ENCODE measurements at regions of chr19 and their contacts with region 1.

Region 1: GRCh38 chr19:54448774-54449700 is at the start of gene LENG8:
- DNase-seq: peak; percentile 98
- ATAC-seq: peak; percentile 92
- H3K4me3 Mint-ChIP-seq: peak within 1 kb of the TSS; percentile 100
- H3K27ac Mint-ChIP-seq: peak within 1 kb of the TSS; percentile 97
- H3K4me1 Mint-ChIP-seq: peaks cover 49% of the 10 kb centered on the region
- H3K27me3 Mint-ChIP-seq: no peaks in the 10 kb centered on the region
- CTCF ChIP-seq: no peak
- total RNA-seq, gene LENG8: 296 and 363 TPM in 2 replicates

Region 2: GRCh38 chr19:54115109-54116063 is 333.7 kb before region 1 on chr19 and contains the starts of genes PRPF31 and TFPT:
- CTCF ChIA-PET with region 1: no interaction called
- POLR2A ChIA-PET with region 1: interaction called, 9 read pairs
- intact Hi-C with region 1: loop called (anchors 2 kb)
- DNase-seq: peak; percentile 90
- ATAC-seq: peak; percentile 93
- H3K4me3 Mint-ChIP-seq: peak within 1 kb of the TSS; percentile 94
- H3K27ac Mint-ChIP-seq: peak within 1 kb of the TSS; percentile 98
- H3K4me1 Mint-ChIP-seq: peaks cover 36% of the 10 kb centered on the region
- H3K27me3 Mint-ChIP-seq: no peaks in the 10 kb centered on the region
- CTCF ChIP-seq: no peak
- total RNA-seq, gene PRPF31: 78.9 and 79.3 TPM in 2 replicates
- total RNA-seq, gene TFPT: 16.6 and 17.9 TPM in 2 replicates

Region 3: GRCh38 chr19:54203151-54203611 is 245.9 kb before region 1 on chr19:
- CTCF ChIA-PET with region 1: no interaction called
- POLR2A ChIA-PET with region 1: interaction called, 16 read pairs
- intact Hi-C with region 1: loop called (anchors 2 kb)
- DNase-seq: no peak
- ATAC-seq: no peak
- H3K4me3 Mint-ChIP-seq: peak overlapping the region; percentile 100
- H3K27ac Mint-ChIP-seq: peak overlapping the region; percentile 24
- H3K4me1 Mint-ChIP-seq: peaks cover 82% of the 10 kb centered on the region
- H3K27me3 Mint-ChIP-seq: no peaks in the 10 kb centered on the region
- CTCF ChIP-seq: no peak

Region 4: DNA sequence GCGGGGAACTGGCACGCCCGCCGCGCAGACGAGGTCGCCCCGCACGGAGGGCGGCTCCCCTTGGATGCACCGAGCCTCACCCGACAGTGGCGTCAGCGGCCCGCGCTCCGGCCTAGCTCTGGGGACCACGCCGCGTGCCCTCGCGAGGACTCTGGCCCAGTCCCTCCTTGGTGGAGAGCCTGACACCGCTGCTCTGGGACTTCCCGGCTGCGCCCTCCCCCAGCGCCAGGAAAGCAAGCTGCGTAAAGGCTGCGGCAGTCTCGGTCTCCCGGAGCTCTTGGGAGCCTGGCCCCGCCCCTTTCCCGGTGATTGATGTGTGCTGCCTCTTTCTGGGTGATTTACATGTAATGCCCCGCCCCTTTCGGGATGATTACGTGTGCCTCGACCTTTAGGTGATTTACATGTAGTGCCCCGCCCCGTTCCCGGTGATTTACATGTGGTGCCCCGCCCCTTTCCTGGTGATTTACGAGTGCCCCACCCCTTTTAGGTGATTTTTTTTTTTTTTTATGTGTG is 14.6 kb after region 1 on chr19 and contains the start of gene LENG9:
- CTCF ChIA-PET with region 1: no interaction called
- POLR2A ChIA-PET with region 1: interaction called, 78 read pairs
- intact Hi-C with region 1: loop called (anchors 1 kb)
- DNase-seq: peak; percentile 85
- ATAC-seq: peak; percentile 61
- H3K4me3 Mint-ChIP-seq: peak within 1 kb of the TSS; percentile 82
- H3K27ac Mint-ChIP-seq: peak within 1 kb of the TSS; percentile 90
- H3K4me1 Mint-ChIP-seq: peaks cover 28% of the 10 kb centered on the region
- H3K27me3 Mint-ChIP-seq: no peaks in the 10 kb centered on the region
- CTCF ChIP-seq: no peak
- total RNA-seq, gene LENG9: 6.3 and 8.5 TPM in 2 replicates

Region 5: GRCh38 chr19:54561840-54562239 is 112.8 kb after region 1 on chr19:
- CTCF ChIA-PET with region 1: no interaction called
- POLR2A ChIA-PET with region 1: no interaction called
- intact Hi-C with region 1: no loop called
- DNase-seq: no peak
- ATAC-seq: no peak
- H3K4me3 Mint-ChIP-seq: no peak overlapping the region
- H3K27ac Mint-ChIP-seq: no peak overlapping the region
- H3K4me1 Mint-ChIP-seq: no peaks in the 10 kb centered on the region
- H3K27me3 Mint-ChIP-seq: peaks cover 15% of the 10 kb centered on the region
- CTCF ChIP-seq: no peak

Region 6: GRCh38 chr19:55643348-55644176 is 1194.5 kb after region 1 on chr19 and contains the start of gene ZNF581:
- CTCF ChIA-PET with region 1: no interaction called
- POLR2A ChIA-PET with region 1: interaction called, 14 read pairs
- intact Hi-C with region 1: no loop called
- DNase-seq: peak; percentile 84
- ATAC-seq: peak; percentile 51
- H3K4me3 Mint-ChIP-seq: peak within 1 kb of the TSS; percentile 86
- H3K27ac Mint-ChIP-seq: peak within 1 kb of the TSS; percentile 96
- H3K4me1 Mint-ChIP-seq: peaks cover 66% of the 10 kb centered on the region
- H3K27me3 Mint-ChIP-seq: no peaks in the 10 kb centered on the region
- CTCF ChIP-seq: no peak
- total RNA-seq, gene ZNF581: 42.7 and 46.5 TPM in 2 replicates